ENCODE measurements at regions of chr20 and their contacts with region 1.

Region 1: DNA sequence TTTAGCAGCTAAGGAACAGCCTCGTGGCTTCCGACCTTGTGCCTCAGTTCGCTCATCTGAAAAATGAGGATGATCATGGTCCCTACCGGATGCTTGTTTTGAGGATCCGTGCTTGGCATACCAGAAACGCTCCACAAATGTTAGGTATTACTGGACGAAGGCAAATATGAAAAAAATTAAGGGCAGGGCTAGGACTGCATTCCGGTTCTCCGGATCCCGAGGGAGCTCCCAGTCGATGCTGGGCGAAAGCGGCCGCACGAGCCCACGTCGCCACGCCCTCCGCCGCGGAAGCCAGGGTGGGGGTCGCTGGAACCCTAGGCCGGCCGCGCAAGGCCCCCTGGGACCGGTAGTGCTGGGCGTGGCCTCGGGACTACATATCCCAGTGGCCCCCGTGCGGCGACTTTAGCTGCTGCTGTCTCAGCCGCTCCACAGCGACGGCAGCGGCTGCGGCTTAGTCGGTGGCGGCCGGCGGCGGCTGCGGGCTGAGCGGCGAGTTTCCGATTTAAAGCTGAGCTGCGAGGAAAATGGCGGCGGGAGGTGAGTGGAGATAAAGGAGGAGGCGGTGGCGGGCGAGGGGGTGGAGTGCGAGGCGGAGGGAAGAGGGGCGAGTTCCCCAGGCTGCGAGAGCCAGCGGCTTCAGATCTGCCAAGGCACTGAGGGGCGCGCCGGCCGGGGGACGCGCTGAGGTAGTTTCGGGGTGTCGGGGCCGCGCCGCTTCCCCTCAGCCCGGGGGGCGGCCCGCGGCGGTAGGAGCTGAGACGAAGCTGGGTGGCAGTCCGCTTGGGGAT is at the start of gene NCOA3:
- DNase-seq: peak; percentile 90 to 98
- H3K4me3 ChIP-seq: peak within 1 kb of the TSS; percentile 77
- H3K27ac ChIP-seq: peak within 1 kb of the TSS; percentile 90
- H3K4me1 ChIP-seq: peaks cover 56% of the 10 kb centered on the region
- H3K27me3 ChIP-seq: no peaks in the 10 kb centered on the region
- CTCF ChIP-seq: peak; percentile 68
- total RNA-seq, gene NCOA3: 40.3 and 78.0 TPM in 2 replicates

Region 2: GRCh38 chr20:46562373-46563169 is 939.1 kb before region 1 on chr20:
- CTCF ChIA-PET with region 1: no interaction called
- POLR2A ChIA-PET with region 1: no interaction called
- intact Hi-C with region 1: no loop called
- DNase-seq: peak; percentile 40 to 59
- H3K4me3 ChIP-seq: no peak overlapping the region
- H3K27ac ChIP-seq: no peak overlapping the region
- H3K4me1 ChIP-seq: no peaks in the 10 kb centered on the region
- H3K27me3 ChIP-seq: no peaks in the 10 kb centered on the region
- CTCF ChIP-seq: peak; percentile 96

Region 3: DNA sequence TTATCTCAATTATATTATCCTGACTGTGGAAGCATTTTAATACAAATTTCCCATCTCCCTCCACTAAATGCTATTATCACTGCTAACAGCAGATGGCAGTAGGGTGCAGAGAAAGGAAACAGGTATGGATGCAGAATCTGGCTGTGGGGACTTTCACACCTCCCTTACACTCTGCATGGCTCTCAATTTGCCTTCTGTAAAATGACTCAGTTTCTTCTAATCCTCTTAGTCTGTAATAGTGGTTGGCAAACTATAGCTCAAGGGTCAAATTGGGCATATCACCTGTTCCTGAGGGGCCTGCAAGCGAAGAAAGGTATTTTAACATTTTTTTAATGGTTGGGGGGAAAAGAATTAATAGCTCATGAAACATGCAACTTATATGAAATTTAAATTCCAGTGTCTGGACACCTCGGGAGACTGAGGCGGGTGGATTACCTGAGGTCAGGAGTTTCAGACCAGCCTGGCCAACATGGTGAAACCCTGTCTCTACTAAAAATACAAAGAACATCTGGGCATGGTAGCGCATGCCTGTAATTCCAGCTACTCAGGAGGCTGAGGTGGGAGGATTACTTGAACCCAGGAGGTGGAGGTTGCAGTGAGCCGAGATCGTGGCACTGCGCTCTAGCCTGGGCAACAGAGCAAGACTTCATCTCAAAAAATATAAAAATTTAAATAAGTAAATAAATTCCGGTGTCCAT is 228.6 kb before region 1 on chr20:
- CTCF ChIA-PET with region 1: no interaction called
- POLR2A ChIA-PET with region 1: no interaction called
- intact Hi-C with region 1: loop called (anchors 5 kb)
- DNase-seq: peak; percentile 53 to 58
- H3K4me3 ChIP-seq: no peak overlapping the region
- H3K27ac ChIP-seq: no peak overlapping the region
- H3K4me1 ChIP-seq: peaks cover 40% of the 10 kb centered on the region
- H3K27me3 ChIP-seq: no peaks in the 10 kb centered on the region
- CTCF ChIP-seq: peak; percentile 97

Region 4: DNA sequence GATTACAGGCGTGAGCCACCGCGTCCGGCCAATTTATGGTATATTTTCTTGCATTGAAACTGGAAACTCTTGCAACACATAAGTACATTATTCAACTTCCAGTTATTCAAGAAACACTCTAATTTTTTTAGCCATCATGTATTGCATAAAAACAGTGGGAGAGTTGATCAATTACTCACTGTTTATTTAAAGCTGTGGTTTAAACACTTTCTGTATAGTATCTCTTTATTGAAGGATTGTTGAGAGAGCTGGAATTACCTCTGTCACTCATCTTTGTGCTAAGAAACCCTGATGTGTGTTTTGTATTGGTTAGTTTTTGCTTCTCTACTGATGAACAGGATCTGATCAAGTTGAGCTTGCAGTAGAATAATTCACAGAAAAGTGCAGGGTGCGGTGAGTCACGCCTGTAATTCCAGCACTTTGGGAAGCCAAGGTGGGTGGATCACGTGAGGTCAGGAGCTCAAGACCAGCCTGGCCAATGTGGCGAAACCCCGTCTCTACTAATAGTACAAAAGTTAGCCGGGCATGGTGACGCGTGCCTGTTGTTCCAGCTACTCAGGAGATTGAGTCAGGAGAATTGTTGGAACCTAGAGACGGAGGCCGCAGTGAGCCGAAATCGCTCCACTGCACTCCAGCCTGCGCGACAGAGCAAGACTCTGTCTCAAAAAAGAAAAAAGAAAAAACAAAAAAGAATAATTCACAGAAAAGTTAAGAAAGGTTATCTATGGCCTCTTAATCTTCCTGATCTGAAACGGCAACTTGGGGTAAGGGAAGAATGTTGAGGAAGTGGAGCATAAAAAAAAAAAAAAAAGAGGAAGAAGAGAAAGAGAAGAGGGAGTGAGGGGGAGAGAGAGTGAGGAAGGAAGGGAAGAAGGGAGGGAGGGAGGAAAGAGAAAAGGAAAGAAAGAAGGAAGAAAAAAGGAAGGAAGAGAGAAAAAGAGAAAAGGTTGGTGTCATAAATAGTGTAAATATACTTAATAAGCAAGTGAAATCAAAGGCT is 69.2 kb before region 1 on chr20:
- CTCF ChIA-PET with region 1: interaction called, 3 read pairs
- POLR2A ChIA-PET with region 1: interaction called, 21 read pairs
- intact Hi-C with region 1: loop called (anchors 2 kb)
- DNase-seq: peak; percentile 87 to 98
- H3K4me3 ChIP-seq: peak overlapping the region; percentile 51
- H3K27ac ChIP-seq: peak overlapping the region; percentile 99
- H3K4me1 ChIP-seq: peaks cover 51% of the 10 kb centered on the region
- H3K27me3 ChIP-seq: no peaks in the 10 kb centered on the region
- CTCF ChIP-seq: no peak

Region 5: GRCh38 chr20:47546184-47547033 is 44.7 kb after region 1 on chr20:
- CTCF ChIA-PET with region 1: no interaction called
- POLR2A ChIA-PET with region 1: interaction called, 4 read pairs
- intact Hi-C with region 1: loop called (anchors 5 kb)
- DNase-seq: peak; percentile 30 to 82
- H3K4me3 ChIP-seq: no peak overlapping the region
- H3K27ac ChIP-seq: peak overlapping the region; percentile 38
- H3K4me1 ChIP-seq: peaks cover 37% of the 10 kb centered on the region
- H3K27me3 ChIP-seq: no peaks in the 10 kb centered on the region
- CTCF ChIP-seq: no peak

Region 6: DNA sequence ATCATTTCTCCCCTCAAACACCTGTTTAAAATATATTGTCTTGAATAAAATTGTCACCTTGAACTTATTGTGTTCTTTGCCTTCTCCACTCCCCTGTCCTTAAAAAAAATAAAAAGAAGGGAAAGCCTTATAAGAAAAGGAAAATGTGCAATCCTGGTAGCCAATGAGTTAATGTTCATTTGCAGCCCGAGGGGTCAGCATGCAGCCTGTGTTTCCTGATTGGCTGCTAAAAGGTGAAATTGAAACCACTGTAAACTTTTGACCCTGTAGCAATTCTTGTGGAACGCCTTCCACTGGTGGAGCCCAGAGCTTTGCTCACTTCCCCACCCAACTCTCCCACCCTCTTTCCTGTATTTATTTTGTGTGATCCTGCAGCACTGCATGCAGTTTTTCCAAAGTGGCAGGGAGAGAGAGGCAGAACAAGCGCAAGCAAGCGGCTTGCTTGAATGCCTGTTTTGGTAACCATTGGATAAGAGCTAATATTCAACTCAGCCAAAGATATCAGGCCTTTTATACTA is 74.9 kb after region 1 on chr20:
- CTCF ChIA-PET with region 1: interaction called, 5 read pairs
- POLR2A ChIA-PET with region 1: interaction called, 6 read pairs
- intact Hi-C with region 1: loop called (anchors 5 kb)
- DNase-seq: peak; percentile 75 to 89
- H3K4me3 ChIP-seq: peak overlapping the region; percentile 45
- H3K27ac ChIP-seq: peak overlapping the region; percentile 64
- H3K4me1 ChIP-seq: peaks cover 67% of the 10 kb centered on the region
- H3K27me3 ChIP-seq: no peaks in the 10 kb centered on the region
- CTCF ChIP-seq: no peak

Region 7: GRCh38 chr20:47610247-47610944 is 108.7 kb after region 1 on chr20:
- CTCF ChIA-PET with region 1: no interaction called
- POLR2A ChIA-PET with region 1: interaction called, 18 read pairs
- intact Hi-C with region 1: no loop called
- DNase-seq: peak; percentile 35 to 69
- H3K4me3 ChIP-seq: no peak overlapping the region
- H3K27ac ChIP-seq: peak overlapping the region; percentile 73
- H3K4me1 ChIP-seq: peaks cover 50% of the 10 kb centered on the region
- H3K27me3 ChIP-seq: no peaks in the 10 kb centered on the region
- CTCF ChIP-seq: no peak

Measured in PC-9 (cell line).